Breast epithelium (tissue), 4 donors: ENCODE measurements at regions of chr1 and their contacts with region 1.

Region 1: DNA sequence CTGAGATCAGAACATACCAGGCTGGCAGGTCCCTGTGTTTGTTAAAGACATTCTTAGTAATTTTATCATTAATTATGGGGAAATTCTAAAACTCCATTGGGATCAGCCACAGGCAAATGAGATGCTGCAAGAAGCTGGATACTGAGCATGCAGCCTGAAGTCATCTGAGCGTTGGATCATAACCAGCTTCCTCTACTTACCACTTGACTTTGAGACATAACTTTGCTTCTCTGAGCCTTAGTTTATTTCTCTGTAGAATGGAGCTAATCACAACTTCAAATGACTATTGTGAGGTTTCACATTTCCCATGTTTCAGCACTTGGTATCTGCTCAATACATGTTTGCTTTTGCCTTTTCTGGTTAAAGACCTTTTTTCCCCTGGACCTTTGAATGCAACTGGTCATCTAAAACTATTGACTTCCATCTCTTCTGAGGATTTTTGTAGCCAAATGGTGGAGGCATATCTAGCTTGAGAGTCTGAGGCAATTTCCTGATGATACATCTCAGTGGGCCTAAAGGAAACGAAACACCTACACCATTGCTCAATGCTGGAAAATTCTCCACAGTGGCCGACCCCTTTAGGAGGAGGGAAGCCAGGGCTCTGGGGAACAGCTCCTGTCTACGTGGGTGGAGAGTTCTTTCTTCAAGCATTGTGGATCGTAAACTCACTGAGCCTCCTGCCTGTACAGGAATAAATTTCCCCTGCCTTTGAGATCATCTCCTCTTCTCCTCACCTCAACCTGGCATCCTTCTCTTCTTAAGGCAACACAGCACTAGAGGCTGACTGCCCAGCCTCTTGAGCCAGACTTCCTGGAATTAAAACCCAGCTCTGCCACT is 109.1 kb upstream of the HOOK1 start:
- DNase-seq: no peak
- H3K4me3 ChIP-seq: no peak overlapping the region
- H3K27ac ChIP-seq: peak overlapping the region; percentile 68 to 83
- H3K4me1 ChIP-seq: no peaks in the 10 kb centered on the region
- H3K27me3 ChIP-seq: no peaks in the 10 kb centered on the region
- CTCF ChIP-seq: no peak
- POLR2A ChIP-seq: no peak

Region 2: GRCh38 chr1:58741678-58742553 is 963.8 kb before region 1 on chr1:
- intact Hi-C with region 1: loop called (anchors 2 kb)
- DNase-seq: no peak
- H3K4me3 ChIP-seq: no peak overlapping the region
- H3K27ac ChIP-seq: no peak overlapping the region
- H3K4me1 ChIP-seq: no peaks in the 10 kb centered on the region
- H3K27me3 ChIP-seq: no peaks in the 10 kb centered on the region
- CTCF ChIP-seq: no peak
- POLR2A ChIP-seq: no peak